ENCODE measurements at regions of chr11 and their contacts with region 1.

Region 1: DNA sequence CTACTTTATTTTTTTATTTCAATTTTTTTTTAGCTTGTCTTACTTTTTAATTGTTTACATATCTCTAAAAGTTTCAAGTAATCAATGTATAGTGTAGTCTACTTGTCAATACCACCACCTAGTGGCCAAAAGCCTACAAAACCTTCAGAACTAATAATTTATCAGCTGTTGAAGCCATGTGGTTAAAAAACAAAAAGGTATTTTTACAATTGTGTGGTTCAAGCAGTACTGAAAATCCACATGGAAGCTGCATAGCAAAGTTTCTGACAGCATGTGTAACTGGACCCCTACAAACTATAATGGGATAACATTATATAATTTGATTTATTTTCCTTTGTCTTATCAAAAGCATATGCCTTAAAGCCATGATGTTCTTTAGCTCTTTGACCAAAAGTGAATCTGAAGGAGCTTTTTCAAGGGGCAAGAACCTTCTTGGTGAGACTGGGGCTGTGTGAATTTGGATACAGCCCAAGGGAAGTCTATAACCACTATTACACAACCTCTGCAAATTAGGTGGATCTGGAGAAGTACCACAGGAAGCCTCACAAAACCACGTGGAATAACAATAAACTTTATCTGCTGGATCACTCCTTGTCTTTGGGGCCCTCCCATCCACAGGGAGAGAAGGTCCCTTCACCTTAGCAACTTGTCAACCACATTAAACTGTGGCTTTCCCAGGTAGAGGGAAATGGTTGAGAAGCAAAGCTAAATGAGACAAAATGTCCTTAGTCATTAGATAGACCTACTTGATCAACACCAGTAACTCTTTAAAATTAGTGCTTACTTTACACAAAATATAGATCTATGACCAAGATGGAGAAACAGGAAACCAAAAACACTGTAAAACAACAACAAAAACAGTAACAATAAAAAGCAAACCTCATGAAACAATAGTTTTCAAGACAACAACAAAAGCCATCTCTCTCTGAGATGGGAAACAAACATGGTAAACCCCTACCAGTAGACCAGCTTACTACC is 9.9 kb downstream of the NARS2 start:
- DNase-seq: peak in 1 of 2 experiments; percentile 80
- H3K4me3 ChIP-seq: no peak overlapping the region
- H3K4me3 Mint-ChIP-seq: no peak overlapping the region
- H3K27ac Mint-ChIP-seq: no peak overlapping the region
- H3K4me1 ChIP-seq: peaks cover 41% of the 10 kb centered on the region
- H3K4me1 Mint-ChIP-seq: peaks cover 20% of the 10 kb centered on the region
- H3K27me3 ChIP-seq: no peaks in the 10 kb centered on the region
- H3K27me3 Mint-ChIP-seq: no peaks in the 10 kb centered on the region
- CTCF ChIP-seq: peak; percentile 81 to 93

Region 2: DNA sequence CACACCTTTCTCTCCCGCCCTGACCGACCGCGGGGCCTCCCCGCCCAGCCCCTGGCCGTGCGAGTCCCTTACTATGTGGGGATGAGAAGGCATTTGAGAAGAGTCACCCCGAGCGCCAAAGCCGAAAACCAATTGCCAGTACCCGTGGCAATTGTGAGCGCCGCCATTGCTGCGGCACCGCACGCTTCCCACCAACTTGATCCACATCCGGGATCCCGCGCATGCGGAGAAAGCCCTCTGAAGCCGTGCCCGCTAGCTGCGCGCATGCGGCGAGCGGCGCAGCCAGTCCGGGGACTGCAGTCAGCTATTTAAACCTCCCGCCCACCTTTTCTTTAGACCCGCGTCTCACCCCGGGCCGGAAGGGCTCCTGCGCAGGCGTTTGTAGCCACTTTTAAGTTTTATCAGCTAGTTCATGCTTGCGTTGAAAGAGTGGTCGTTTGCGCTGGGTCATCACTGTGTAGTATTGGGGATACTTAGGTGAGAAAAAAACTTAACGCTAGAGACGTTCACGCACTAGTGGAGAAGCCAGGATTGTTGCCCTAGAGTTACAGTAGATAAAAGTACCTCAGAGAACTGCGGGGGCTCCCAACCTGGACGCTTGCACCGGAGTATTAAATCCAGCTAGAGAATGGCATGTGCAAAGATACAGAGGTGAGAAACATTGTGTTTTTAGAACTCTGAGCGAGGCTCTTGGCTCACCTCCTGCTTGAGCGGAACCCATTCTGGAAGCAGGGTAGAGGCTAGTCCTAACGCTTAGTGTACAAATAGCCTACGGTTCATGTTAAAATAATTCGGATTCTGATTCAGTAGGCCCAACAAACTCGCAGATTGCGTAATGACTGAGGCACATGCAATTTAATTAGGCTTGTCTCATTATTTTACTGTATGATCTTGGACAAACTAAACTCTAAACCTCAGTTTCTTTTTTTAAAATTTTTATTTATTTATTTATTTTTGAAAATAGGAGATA is 425.1 kb before region 1 on chr11 and contains the start of gene ALG8:
- CTCF ChIA-PET with region 1: no interaction called
- POLR2A ChIA-PET with region 1: interaction called, 3 read pairs
- intact Hi-C with region 1: loop called (anchors 2 kb)
- DNase-seq: peak; percentile 99
- H3K4me3 ChIP-seq: peak within 1 kb of the TSS; percentile 49
- H3K4me3 Mint-ChIP-seq: peak within 1 kb of the TSS; percentile 90
- H3K27ac Mint-ChIP-seq: peak within 1 kb of the TSS; percentile 83
- H3K4me1 ChIP-seq: peaks cover 5% of the 10 kb centered on the region
- H3K4me1 Mint-ChIP-seq: peaks cover 21% of the 10 kb centered on the region
- H3K27me3 ChIP-seq: no peaks in the 10 kb centered on the region
- H3K27me3 Mint-ChIP-seq: no peaks in the 10 kb centered on the region
- CTCF ChIP-seq: no peak
- total RNA-seq, gene ALG8: 188 and 191 TPM in 2 replicates

Region 3: DNA sequence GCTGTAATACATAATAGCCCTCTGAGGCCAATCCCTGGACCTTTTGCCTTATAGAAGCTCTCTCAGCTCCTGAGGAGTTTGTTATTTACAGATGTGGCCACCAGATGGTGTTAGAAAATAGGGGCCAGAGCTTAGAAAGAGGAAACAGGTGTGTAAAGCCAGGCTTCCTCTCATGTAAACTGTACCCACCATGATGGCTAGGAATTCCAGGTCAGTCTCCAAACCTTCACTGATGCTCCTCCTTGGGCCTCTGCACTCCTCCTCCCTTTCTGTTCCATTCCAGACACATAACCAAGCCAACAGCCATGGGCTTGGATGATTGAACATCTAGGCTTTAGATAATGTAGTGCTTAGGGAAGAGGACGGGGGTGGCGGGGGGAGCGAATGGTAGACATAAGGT is 336.3 kb before region 1 on chr11:
- CTCF ChIA-PET with region 1: interaction called, 83 read pairs
- POLR2A ChIA-PET with region 1: interaction called, 3 read pairs
- intact Hi-C with region 1: loop called (anchors 1 kb)
- DNase-seq: peak; percentile 72 to 81
- H3K4me3 ChIP-seq: no peak overlapping the region
- H3K4me3 Mint-ChIP-seq: no peak overlapping the region
- H3K27ac Mint-ChIP-seq: peak overlapping the region; percentile 24
- H3K4me1 ChIP-seq: no peaks in the 10 kb centered on the region
- H3K4me1 Mint-ChIP-seq: no peaks in the 10 kb centered on the region
- H3K27me3 ChIP-seq: no peaks in the 10 kb centered on the region
- H3K27me3 Mint-ChIP-seq: no peaks in the 10 kb centered on the region
- CTCF ChIP-seq: peak; percentile 79 to 88

Region 4: DNA sequence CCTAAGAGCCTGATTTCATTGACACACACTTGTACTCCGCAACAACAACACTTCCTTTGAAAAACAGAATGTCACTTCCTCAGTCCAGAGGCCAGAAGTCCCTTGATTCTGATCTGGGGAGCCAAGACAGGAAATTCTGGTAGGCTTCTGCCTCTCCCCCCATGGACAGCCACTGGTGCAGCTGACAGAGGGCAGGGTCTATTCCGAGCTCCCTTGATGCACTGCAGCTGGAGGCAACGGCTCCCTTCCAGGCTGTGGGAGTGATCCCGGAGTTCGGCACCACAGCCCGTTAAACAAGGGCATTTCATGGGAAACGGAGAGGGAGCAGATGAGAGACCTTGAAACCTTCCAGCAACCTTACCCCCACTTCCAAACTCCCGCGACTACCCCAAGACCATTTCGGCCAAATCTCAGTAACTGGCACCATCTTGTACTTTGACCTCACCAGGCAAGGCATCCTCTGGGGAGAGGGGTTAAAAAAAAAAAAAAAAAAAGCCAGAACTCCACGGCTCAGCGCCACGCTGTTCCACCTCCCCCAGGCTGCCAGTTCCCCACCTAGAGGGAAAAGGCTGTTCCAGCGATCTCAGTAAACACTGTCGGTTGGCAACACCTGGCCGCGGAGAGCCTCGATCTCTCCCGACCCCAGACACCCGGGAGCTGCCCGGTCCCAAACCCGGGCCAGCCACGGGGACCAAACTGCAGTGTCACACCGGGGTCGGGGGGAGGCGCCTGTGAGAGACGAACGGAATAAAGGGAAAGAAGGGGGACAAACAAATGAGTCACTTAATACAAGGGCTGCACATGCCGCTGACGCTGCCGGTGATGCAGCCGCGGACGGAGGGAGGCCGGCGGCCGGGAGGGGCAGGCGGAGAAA is 148.2 kb before region 1 on chr11:
- CTCF ChIA-PET with region 1: interaction called, 48 read pairs
- POLR2A ChIA-PET with region 1: no interaction called
- intact Hi-C with region 1: loop called (anchors 1 kb)
- DNase-seq: peak; percentile 93 to 96
- H3K4me3 ChIP-seq: peak overlapping the region; percentile 70
- H3K4me3 Mint-ChIP-seq: peak overlapping the region; percentile 76
- H3K27ac Mint-ChIP-seq: peak overlapping the region; percentile 79
- H3K4me1 ChIP-seq: peaks cover 23% of the 10 kb centered on the region
- H3K4me1 Mint-ChIP-seq: peaks cover 38% of the 10 kb centered on the region
- H3K27me3 ChIP-seq: no peaks in the 10 kb centered on the region
- H3K27me3 Mint-ChIP-seq: no peaks in the 10 kb centered on the region
- CTCF ChIP-seq: peak; percentile 81 to 88

Region 5: DNA sequence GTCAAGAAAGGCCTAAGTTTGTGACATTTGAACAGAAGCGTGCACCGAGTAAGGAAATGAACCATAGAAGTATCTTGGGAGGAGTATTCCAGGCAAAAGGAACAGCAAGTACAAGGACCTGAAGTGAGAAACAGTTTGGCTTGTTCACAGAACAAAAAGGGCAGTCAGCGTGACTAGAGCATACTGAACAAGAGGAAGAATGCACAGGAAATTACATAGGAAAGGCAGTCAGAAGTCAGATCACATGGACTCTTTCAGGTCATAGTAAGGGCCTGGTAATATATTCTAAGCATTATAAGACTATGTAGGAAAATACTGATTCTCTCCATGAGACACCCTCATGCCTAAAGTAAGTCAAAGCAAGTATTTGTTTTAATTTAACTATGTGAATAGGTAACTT is 94.9 kb before region 1 on chr11:
- CTCF ChIA-PET with region 1: no interaction called
- POLR2A ChIA-PET with region 1: no interaction called
- intact Hi-C with region 1: loop called (anchors 5 kb)
- DNase-seq: no peak
- H3K4me3 ChIP-seq: no peak overlapping the region
- H3K4me3 Mint-ChIP-seq: no peak overlapping the region
- H3K27ac Mint-ChIP-seq: no peak overlapping the region
- H3K4me1 ChIP-seq: peaks cover 8% of the 10 kb centered on the region; the same call in 1 of the 2 replicates
- H3K4me1 Mint-ChIP-seq: peaks cover 17% of the 10 kb centered on the region
- H3K27me3 ChIP-seq: no peaks in the 10 kb centered on the region
- H3K27me3 Mint-ChIP-seq: no peaks in the 10 kb centered on the region
- CTCF ChIP-seq: no peak

Region 6: GRCh38 chr11:78586452-78587046 is 21.8 kb after region 1 on chr11:
- CTCF ChIA-PET with region 1: no interaction called
- POLR2A ChIA-PET with region 1: no interaction called
- intact Hi-C with region 1: no loop called
- DNase-seq: no peak
- H3K4me3 ChIP-seq: no peak overlapping the region
- H3K4me3 Mint-ChIP-seq: no peak overlapping the region
- H3K27ac Mint-ChIP-seq: no peak overlapping the region
- H3K4me1 ChIP-seq: peaks cover 7% of the 10 kb centered on the region
- H3K4me1 Mint-ChIP-seq: peaks cover 18% of the 10 kb centered on the region
- H3K27me3 ChIP-seq: no peaks in the 10 kb centered on the region
- H3K27me3 Mint-ChIP-seq: no peaks in the 10 kb centered on the region
- CTCF ChIP-seq: peak; percentile 51 to 85

Region 7: DNA sequence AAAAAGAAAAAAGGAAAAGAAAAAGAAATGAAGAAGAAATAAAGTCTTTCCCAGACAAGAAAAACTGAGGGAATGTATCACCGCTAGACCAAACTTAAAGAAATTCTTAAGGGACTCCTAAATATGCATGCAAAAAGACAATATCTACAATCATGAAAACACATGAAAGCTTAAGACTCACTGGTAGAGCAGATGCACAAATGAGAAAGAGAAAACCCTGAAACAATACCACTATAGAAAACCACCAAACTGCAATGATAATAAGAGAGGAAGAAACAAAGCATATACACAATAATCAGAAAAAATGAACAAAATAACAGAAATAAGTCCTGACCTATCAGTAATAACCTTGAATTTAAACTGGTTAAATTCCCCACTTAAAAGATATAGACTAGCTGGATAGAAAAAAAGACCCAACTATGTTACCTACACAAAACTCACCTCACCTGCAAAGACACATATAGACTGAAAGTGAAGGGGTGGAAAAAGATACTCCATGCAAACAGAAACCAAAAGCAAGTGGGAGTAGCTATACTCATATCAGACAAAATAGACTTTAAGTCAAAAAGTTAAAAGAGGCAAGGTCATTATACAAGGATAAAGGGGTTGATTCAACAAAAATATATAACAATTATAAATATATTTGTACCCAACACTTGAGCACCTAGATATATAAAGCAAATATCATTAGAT is 71.2 kb after region 1 on chr11:
- CTCF ChIA-PET with region 1: no interaction called
- POLR2A ChIA-PET with region 1: no interaction called
- intact Hi-C with region 1: no loop called
- DNase-seq: no peak
- H3K4me3 ChIP-seq: no peak overlapping the region
- H3K4me3 Mint-ChIP-seq: no peak overlapping the region
- H3K27ac Mint-ChIP-seq: no peak overlapping the region
- H3K4me1 ChIP-seq: no peaks in the 10 kb centered on the region
- H3K4me1 Mint-ChIP-seq: no peaks in the 10 kb centered on the region
- H3K27me3 ChIP-seq: no peaks in the 10 kb centered on the region
- H3K27me3 Mint-ChIP-seq: peaks cover 16% of the 10 kb centered on the region
- CTCF ChIP-seq: no peak